ENCODE measurements at regions of chr11 and their contacts with region 1.

Region 1: GRCh38 chr11:75204685-75205563 is 35.6 kb upstream of the TPBGL start:
- DNase-seq: peak; percentile 77
- ATAC-seq: peak; percentile 100
- H3K4me3 ChIP-seq: no peak overlapping the region
- H3K27ac ChIP-seq: no peak overlapping the region
- H3K4me1 ChIP-seq: no peaks in the 10 kb centered on the region
- H3K27me3 ChIP-seq: peaks cover 50% of the 10 kb centered on the region
- CTCF ChIP-seq: peak; percentile 87
- POLR2A ChIP-seq: no peak
- RAD21 ChIP-seq: peak; percentile 85

Region 2: DNA sequence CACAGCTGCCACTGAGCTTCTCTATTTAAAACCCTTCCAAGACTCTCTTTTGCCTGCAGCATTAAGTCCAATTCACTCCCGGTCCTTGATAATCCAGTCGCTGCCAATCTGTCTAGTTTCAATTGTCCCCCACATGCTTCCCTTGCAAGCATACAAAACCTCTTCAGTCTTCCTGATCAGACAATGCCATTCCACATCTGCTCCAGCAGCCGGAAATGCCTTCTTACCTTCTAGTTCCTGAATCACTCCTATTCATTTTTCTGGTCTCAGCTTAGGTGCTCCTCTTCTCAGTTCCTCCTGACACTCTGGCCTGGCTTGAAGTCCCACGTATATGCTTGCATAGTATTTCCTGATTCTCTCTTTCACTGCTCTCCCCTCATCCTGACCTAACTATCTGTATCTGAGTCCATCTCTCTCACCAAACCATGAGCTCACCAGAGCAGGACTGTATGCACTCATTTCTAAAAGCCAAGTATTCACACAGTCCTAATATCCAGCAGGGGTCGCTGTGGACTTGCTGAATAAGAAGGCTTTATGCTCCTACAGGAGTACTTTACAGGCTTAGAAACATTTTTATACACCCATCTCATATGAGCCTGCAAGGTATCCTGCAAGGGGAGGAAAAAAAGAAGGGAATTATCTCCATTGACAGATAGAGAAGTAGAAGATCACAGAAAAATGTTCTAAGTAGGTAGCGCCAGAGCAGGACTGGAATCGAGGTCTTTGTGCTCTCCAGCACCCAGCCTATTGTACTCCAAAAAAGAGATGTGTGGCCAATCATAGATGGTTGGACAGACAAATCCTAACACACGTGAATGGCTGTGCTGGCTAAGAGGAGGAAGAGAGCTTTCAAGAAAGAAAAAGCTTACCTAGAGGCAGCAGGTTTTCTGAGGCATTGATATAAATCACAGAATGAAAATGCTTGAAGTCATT is 275.2 kb before region 1 on chr11:
- CTCF ChIA-PET with region 1: interaction called, 7 read pairs
- POLR2A ChIA-PET with region 1: no interaction called
- dilution Hi-C with region 1: no loop called
- in situ Hi-C with region 1: no loop called
- intact Hi-C with region 1: loop called (anchors 2 kb)
- DNase-seq: peak; percentile 95
- ATAC-seq: peak; percentile 81
- H3K4me3 ChIP-seq: no peak overlapping the region
- H3K27ac ChIP-seq: no peak overlapping the region
- H3K4me1 ChIP-seq: peaks cover 14% of the 10 kb centered on the region
- H3K27me3 ChIP-seq: no peaks in the 10 kb centered on the region
- CTCF ChIP-seq: peak; percentile 93
- POLR2A ChIP-seq: no peak
- RAD21 ChIP-seq: peak; percentile 92

Region 3: GRCh38 chr11:75022759-75023396 is 182.0 kb before region 1 on chr11:
- CTCF ChIA-PET with region 1: interaction called, 18 read pairs
- POLR2A ChIA-PET with region 1: no interaction called
- dilution Hi-C with region 1: no loop called
- in situ Hi-C with region 1: loop called (anchors 5 kb)
- intact Hi-C with region 1: loop called (anchors 1 kb)
- DNase-seq: peak; percentile 84
- ATAC-seq: peak; percentile 99
- H3K4me3 ChIP-seq: no peak overlapping the region
- H3K27ac ChIP-seq: no peak overlapping the region
- H3K4me1 ChIP-seq: no peaks in the 10 kb centered on the region
- H3K27me3 ChIP-seq: peaks cover 3% of the 10 kb centered on the region
- CTCF ChIP-seq: peak; percentile 99
- POLR2A ChIP-seq: no peak
- RAD21 ChIP-seq: peak; percentile 98

Region 4: DNA sequence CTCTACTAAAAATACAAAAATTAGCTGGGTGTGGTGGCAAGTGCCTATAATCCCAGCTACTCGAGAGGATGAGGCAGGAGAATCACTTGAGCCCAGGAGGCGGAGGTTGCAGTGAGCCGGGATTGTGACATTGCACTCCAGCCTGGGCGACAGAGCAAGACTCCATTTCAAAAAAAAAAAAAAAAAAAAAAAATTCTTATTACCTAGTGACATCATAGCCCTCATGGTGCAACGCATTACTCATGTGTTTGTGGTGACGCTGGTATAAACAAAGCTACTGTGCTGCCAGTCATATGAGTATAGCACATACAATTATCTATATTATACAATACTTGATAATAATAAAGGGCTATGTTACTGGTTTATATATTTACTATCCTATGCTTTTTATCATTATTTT is 149.5 kb before region 1 on chr11:
- CTCF ChIA-PET with region 1: no interaction called
- POLR2A ChIA-PET with region 1: no interaction called
- dilution Hi-C with region 1: no loop called
- in situ Hi-C with region 1: no loop called
- intact Hi-C with region 1: no loop called
- DNase-seq: peak; percentile 34
- ATAC-seq: no peak
- H3K4me3 ChIP-seq: no peak overlapping the region
- H3K27ac ChIP-seq: no peak overlapping the region
- H3K4me1 ChIP-seq: no peaks in the 10 kb centered on the region
- H3K27me3 ChIP-seq: peaks cover 24% of the 10 kb centered on the region
- CTCF ChIP-seq: no peak
- POLR2A ChIP-seq: no peak
- RAD21 ChIP-seq: no peak

Region 5: DNA sequence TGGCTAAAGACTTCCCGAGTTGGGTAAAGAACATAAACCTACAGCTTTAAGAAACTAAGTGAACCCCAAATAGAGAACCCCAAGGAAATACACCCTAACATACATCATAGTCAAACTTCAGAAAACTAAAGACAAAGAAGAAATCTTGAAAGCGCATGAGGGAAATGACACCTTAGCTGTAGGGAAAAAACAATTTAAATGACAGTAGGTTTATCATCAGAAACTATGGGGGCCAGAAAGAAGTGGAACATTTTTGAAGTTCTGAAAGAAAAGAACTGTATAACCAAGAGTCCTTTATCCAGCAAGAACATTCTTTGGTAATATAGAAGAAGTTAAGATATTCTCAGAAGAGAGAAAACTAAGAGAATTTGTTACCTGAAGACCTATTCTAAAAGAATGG is 92.7 kb before region 1 on chr11:
- CTCF ChIA-PET with region 1: no interaction called
- POLR2A ChIA-PET with region 1: no interaction called
- dilution Hi-C with region 1: no loop called
- in situ Hi-C with region 1: no loop called
- intact Hi-C with region 1: no loop called
- DNase-seq: no peak
- ATAC-seq: no peak
- H3K4me3 ChIP-seq: no peak overlapping the region
- H3K27ac ChIP-seq: no peak overlapping the region
- H3K4me1 ChIP-seq: no peaks in the 10 kb centered on the region
- H3K27me3 ChIP-seq: peaks cover 32% of the 10 kb centered on the region
- CTCF ChIP-seq: no peak
- POLR2A ChIP-seq: no peak
- RAD21 ChIP-seq: no peak

Region 6: DNA sequence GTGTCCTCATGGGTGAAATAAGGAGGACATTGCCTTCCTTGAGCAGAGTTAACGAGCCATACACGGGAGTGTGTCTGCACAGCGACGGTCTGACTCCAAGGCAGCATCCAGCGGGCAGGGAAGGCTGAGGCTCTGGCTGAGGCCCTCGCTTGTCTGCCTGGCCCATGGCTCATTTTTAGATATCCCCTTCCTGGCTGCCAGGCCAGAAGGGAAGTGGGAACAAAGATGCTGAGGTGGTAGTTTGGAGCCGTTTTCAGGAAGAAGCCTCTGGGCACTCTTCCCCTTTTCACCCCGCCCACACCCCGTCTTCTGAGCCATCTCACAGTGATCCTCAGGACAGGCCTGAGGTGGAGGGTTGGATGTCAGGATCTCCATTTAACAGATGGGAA is 57.1 kb before region 1 on chr11:
- CTCF ChIA-PET with region 1: interaction called, 43 read pairs
- POLR2A ChIA-PET with region 1: interaction called, 3 read pairs
- dilution Hi-C with region 1: no loop called
- in situ Hi-C with region 1: loop called (anchors 5 kb)
- intact Hi-C with region 1: loop called (anchors 1 kb)
- DNase-seq: no peak
- ATAC-seq: no peak
- H3K4me3 ChIP-seq: no peak overlapping the region
- H3K27ac ChIP-seq: no peak overlapping the region
- H3K4me1 ChIP-seq: peaks cover 2% of the 10 kb centered on the region; the same call in 1 of the 2 replicates
- H3K27me3 ChIP-seq: peaks cover 53% of the 10 kb centered on the region
- CTCF ChIP-seq: no peak
- POLR2A ChIP-seq: no peak
- RAD21 ChIP-seq: no peak